ENCODE measurements at regions of chr4 and their contacts with region 1.

Region 1: GRCh38 chr4:156665780-156666366 is 305.7 kb downstream of the PDGFC start:
- DNase-seq: no peak
- ATAC-seq: no peak
- H3K4me3 ChIP-seq: no peak overlapping the region
- H3K4me3 Mint-ChIP-seq: no peak overlapping the region
- H3K27ac ChIP-seq: no peak overlapping the region
- H3K27ac Mint-ChIP-seq: no peak overlapping the region
- H3K4me1 ChIP-seq: no peaks in the 10 kb centered on the region
- H3K4me1 Mint-ChIP-seq: no peaks in the 10 kb centered on the region
- H3K27me3 ChIP-seq: no peaks in the 10 kb centered on the region
- H3K27me3 Mint-ChIP-seq: no peaks in the 10 kb centered on the region
- CTCF ChIP-seq: no peak

Region 2: DNA sequence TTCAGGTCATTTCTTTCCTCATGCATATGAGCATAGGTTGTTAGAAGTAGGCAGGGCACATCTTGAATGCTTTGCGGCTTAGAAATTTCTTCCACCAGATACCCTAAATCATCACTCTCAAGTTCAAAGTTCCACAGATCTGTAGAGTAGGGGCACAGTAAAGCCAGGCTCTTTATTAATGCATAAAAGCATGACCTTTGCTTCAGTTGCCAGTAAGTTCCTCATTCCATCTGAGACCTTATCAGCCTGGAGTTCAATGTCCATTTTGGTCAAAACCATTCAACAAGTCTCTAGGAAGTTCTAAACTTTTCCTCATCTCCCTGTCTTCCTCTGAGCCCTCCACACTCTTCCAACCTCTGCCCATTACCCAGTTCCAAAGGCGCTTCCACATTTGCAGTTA is 1366.8 kb before region 1 on chr4:
- CTCF ChIA-PET with region 1: no interaction called
- POLR2A ChIA-PET with region 1: no interaction called
- intact Hi-C with region 1: loop called in 1 of 2 experiments (anchors 5 kb)
- DNase-seq: no peak
- ATAC-seq: no peak
- H3K4me3 ChIP-seq: no peak overlapping the region
- H3K4me3 Mint-ChIP-seq: no peak overlapping the region
- H3K27ac ChIP-seq: no peak overlapping the region
- H3K27ac Mint-ChIP-seq: no peak overlapping the region
- H3K4me1 ChIP-seq: no peaks in the 10 kb centered on the region
- H3K4me1 Mint-ChIP-seq: no peaks in the 10 kb centered on the region
- H3K27me3 ChIP-seq: no peaks in the 10 kb centered on the region
- H3K27me3 Mint-ChIP-seq: no peaks in the 10 kb centered on the region
- CTCF ChIP-seq: no peak